ENCODE measurements at regions of chr12 and their contacts with region 1.

Region 1: GRCh38 chr12:127257366-127257935 is 1009.5 kb upstream of the TMEM132C start:
- DNase-seq: no peak
- H3K4me3 ChIP-seq: no peak overlapping the region
- H3K27ac ChIP-seq: no peak overlapping the region
- H3K4me1 ChIP-seq: no peaks in the 10 kb centered on the region
- H3K27me3 ChIP-seq: no peaks in the 10 kb centered on the region
- CTCF ChIP-seq: no peak
- EP300 ChIP-seq: no peak
- POLR2A ChIP-seq: no peak

Region 2: DNA sequence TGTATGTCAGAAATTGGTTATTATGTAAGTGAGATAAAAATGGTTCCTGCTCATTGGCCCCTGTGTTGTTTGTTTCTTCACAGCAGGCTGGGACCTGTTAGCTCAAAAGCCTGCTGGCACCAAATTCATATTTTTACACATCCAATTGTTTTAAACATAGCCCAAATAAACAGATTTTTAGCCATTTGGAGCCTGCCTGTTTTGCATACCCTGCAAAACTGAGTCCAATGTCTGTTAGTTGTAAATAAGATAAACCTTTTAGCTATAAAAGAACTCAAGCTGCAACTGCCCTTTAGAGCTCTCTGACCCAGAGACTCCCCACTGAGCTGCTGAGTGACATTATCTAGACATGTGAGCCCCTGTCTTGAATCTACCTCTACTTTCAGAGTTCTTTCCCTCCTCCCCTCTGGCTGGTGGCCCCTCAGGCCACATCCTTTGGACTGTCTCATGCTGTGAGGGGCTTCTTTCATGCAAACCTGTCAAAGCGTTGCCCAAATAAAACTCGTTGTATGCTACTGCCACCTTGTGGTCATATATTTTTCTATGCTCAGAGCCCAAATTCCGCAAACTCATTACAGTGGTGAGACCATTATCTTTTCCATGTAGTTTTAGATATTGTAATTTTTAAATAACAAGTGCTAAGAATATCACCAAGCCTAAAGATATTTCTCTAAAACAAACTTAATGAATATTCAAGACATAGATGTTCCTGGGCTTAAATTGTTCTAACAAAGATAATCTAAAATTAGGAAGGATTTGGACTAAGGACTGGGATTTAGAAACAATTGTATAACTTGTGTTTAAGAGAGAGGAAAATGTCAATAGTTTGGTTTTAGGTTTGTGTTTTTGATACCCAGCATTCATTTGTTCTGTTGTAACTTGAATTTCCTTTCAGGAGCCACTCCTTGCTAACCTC is 1854.3 kb before region 1 on chr12:
- intact Hi-C with region 1: loop called in 1 of 4 experiments (anchors 10 kb)
- DNase-seq: no peak
- H3K4me3 ChIP-seq: no peak overlapping the region
- H3K27ac ChIP-seq: no peak overlapping the region
- H3K4me1 ChIP-seq: no peaks in the 10 kb centered on the region
- H3K27me3 ChIP-seq: no peaks in the 10 kb centered on the region
- CTCF ChIP-seq: no peak
- EP300 ChIP-seq: no peak
- POLR2A ChIP-seq: no peak

Region 3: DNA sequence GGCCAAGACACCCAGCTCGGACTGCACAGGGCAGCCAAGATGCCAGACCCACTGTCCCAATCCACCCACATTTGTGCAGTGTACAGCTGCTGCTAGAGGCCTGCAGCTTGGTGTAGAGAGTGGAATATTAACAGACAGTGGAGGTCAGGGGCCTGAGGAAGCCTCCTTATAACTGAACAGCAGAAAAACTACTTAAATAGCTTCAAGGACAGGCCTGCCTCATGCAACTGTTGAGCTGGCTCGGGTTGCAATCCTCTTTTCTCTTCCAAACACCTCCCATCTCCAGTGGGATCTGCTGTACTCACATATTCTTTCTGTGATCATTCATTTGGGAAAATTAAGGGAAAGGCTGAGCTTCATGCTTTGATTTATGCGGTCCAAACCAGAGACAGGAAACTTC is 33.7 kb before region 1 on chr12:
- intact Hi-C with region 1: no loop called
- DNase-seq: no peak
- H3K4me3 ChIP-seq: no peak overlapping the region
- H3K27ac ChIP-seq: no peak overlapping the region
- H3K4me1 ChIP-seq: no peaks in the 10 kb centered on the region
- H3K27me3 ChIP-seq: no peaks in the 10 kb centered on the region
- CTCF ChIP-seq: no peak
- EP300 ChIP-seq: no peak
- POLR2A ChIP-seq: no peak

Region 4: GRCh38 chr12:127241072-127241817 is 16.2 kb before region 1 on chr12:
- intact Hi-C with region 1: no loop called
- DNase-seq: no peak
- H3K4me3 ChIP-seq: no peak overlapping the region
- H3K27ac ChIP-seq: no peak overlapping the region
- H3K4me1 ChIP-seq: no peaks in the 10 kb centered on the region
- H3K27me3 ChIP-seq: no peaks in the 10 kb centered on the region
- CTCF ChIP-seq: no peak
- EP300 ChIP-seq: no peak
- POLR2A ChIP-seq: no peak

Region 5: GRCh38 chr12:127588249-127588648 is 330.8 kb after region 1 on chr12:
- intact Hi-C with region 1: no loop called
- DNase-seq: no peak
- H3K4me3 ChIP-seq: no peak overlapping the region
- H3K27ac ChIP-seq: no peak overlapping the region
- H3K4me1 ChIP-seq: no peaks in the 10 kb centered on the region
- H3K27me3 ChIP-seq: no peaks in the 10 kb centered on the region
- CTCF ChIP-seq: no peak
- EP300 ChIP-seq: no peak
- POLR2A ChIP-seq: no peak

Measured in ovary (tissue), 10 donors.